Calu3 (cell line): ENCODE measurements at regions of chr5 and their contacts with region 1.

Region 1: GRCh38 chr5:120457839-120458507 is 6.1 kb upstream of the PRR16 start:
- DNase-seq: peak; percentile 89
- H3K4me3 Mint-ChIP-seq: peak overlapping the region; percentile 87
- H3K27ac Mint-ChIP-seq: peak overlapping the region; percentile 79
- H3K4me1 Mint-ChIP-seq: peaks cover 11% of the 10 kb centered on the region
- H3K27me3 Mint-ChIP-seq: no peaks in the 10 kb centered on the region
- CTCF ChIP-seq: peak; percentile 90

Region 2: GRCh38 chr5:119470851-119471451 is 987.0 kb before region 1 on chr5:
- CTCF ChIA-PET with region 1: no interaction called
- intact Hi-C with region 1: loop called (anchors 10 kb)
- DNase-seq: peak; percentile 41
- H3K4me3 Mint-ChIP-seq: no peak overlapping the region
- H3K27ac Mint-ChIP-seq: no peak overlapping the region
- H3K4me1 Mint-ChIP-seq: no peaks in the 10 kb centered on the region
- H3K27me3 Mint-ChIP-seq: no peaks in the 10 kb centered on the region
- CTCF ChIP-seq: peak; percentile 77

Region 3: GRCh38 chr5:119943148-119943547 is 514.8 kb before region 1 on chr5:
- CTCF ChIA-PET with region 1: no interaction called
- intact Hi-C with region 1: loop called (anchors 1 kb)
- DNase-seq: no peak
- H3K4me3 Mint-ChIP-seq: no peak overlapping the region
- H3K27ac Mint-ChIP-seq: no peak overlapping the region
- H3K4me1 Mint-ChIP-seq: no peaks in the 10 kb centered on the region
- H3K27me3 Mint-ChIP-seq: no peaks in the 10 kb centered on the region
- CTCF ChIP-seq: peak; percentile 12

Region 4: GRCh38 chr5:120055858-120056257 is 402.1 kb before region 1 on chr5:
- CTCF ChIA-PET with region 1: interaction called, 7 read pairs
- intact Hi-C with region 1: loop called (anchors 2 kb)
- DNase-seq: no peak
- H3K4me3 Mint-ChIP-seq: no peak overlapping the region
- H3K27ac Mint-ChIP-seq: no peak overlapping the region
- H3K4me1 Mint-ChIP-seq: no peaks in the 10 kb centered on the region
- H3K27me3 Mint-ChIP-seq: no peaks in the 10 kb centered on the region
- CTCF ChIP-seq: no peak

Region 5: GRCh38 chr5:120270498-120270897 is 187.5 kb before region 1 on chr5:
- CTCF ChIA-PET with region 1: no interaction called
- intact Hi-C with region 1: no loop called
- DNase-seq: no peak
- H3K4me3 Mint-ChIP-seq: no peak overlapping the region
- H3K27ac Mint-ChIP-seq: no peak overlapping the region
- H3K4me1 Mint-ChIP-seq: no peaks in the 10 kb centered on the region
- H3K27me3 Mint-ChIP-seq: no peaks in the 10 kb centered on the region
- CTCF ChIP-seq: no peak